Natural killer cell (primary cell): ENCODE measurements at regions of chr18 and their contacts with region 1.

Region 1: DNA sequence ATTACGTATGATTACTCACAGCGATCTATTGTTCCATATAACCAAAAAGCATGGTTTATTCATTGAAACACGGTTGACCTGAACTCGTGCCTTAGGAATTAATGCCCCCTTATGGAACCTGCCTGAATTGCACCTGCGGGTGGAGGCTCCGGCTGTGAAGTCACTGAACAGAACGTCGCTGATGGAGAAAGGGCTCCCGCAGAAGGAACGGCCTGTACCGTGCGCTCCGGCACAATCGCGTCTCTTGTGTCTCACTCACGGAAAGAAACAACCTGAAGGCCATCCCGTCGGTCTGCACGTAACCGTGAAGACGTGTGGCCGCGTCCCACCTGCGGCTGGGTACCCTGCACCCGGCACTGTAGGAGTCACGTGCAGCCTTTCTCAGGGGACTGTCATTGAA is 133.1 kb downstream of the NFATC1 start:
- DNase-seq: peak; percentile 49 to 86
- ATAC-seq: peak in 2 of 3 donors; percentile 33 to 36
- H3K4me3 ChIP-seq: no peak overlapping the region
- H3K4me3 Mint-ChIP-seq: no peak overlapping the region
- H3K27ac ChIP-seq: no peak overlapping the region
- H3K27ac Mint-ChIP-seq: no peak overlapping the region
- H3K4me1 ChIP-seq: peaks cover 11% of the 10 kb centered on the region
- H3K4me1 Mint-ChIP-seq: peaks cover 10 to 18% of the 10 kb centered on the region in 2 donors
- H3K27me3 ChIP-seq: no peaks in the 10 kb centered on the region
- H3K27me3 Mint-ChIP-seq: no peaks in the 10 kb centered on the region
- CTCF ChIP-seq: peak; percentile 75

Region 2: DNA sequence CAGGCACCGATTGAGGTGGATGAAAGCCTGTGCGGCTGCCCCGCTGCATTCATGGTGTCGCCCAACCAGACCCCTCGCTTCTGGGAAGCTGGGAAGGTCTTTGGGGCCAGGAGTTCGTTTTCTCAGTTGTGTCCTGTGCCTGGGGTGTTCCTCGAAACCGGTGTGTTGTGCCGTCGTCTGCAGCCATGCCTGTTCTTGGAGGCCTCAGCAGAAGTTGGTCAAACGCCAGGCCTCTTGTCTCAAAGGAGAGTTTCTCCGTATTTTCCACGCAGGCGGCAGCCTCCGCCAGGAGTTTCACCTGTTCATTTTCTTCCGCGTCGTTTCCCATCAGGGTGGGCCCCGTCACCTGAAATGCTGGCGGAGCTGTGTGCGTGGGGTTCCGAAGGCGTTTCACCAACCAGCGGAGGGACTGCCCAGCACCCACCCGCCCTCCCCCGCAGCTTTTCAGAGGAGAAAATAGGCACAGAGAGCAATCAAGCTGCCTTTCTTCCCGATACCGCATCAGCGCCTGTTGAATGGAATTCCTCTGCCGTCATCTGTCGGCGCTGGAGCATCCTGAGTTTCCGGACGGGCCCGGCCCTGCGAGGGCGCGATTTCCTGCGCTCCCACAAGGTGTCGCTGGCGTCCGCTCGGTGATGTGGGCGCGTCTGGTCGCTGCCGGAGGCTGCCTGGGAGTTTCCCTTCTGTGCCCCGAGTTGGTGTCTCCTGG is 150.2 kb before region 1 on chr18:
- intact Hi-C with region 1: loop called (anchors 1 kb)
- DNase-seq: peak; percentile 75 to 92
- ATAC-seq: peak; percentile 85 to 98 (median 94)
- H3K4me3 ChIP-seq: no peak overlapping the region
- H3K4me3 Mint-ChIP-seq: no peak overlapping the region
- H3K27ac ChIP-seq: no peak overlapping the region
- H3K27ac Mint-ChIP-seq: peak overlapping the region; percentile 41 to 66
- H3K4me1 ChIP-seq: peaks cover 8% of the 10 kb centered on the region
- H3K4me1 Mint-ChIP-seq: peaks cover 5 to 7% of the 10 kb centered on the region in 2 donors
- H3K27me3 ChIP-seq: no peaks in the 10 kb centered on the region
- H3K27me3 Mint-ChIP-seq: no peaks in the 10 kb centered on the region
- CTCF ChIP-seq: peak; percentile 93

Region 3: GRCh38 chr18:79644006-79644665 is 115.3 kb after region 1 on chr18:
- intact Hi-C with region 1: loop called (anchors 10 kb)
- DNase-seq: peak; percentile 43 to 81
- ATAC-seq: peak; percentile 82 to 97 (median 95)
- H3K4me3 ChIP-seq: no peak overlapping the region
- H3K4me3 Mint-ChIP-seq: no peak overlapping the region
- H3K27ac ChIP-seq: no peak overlapping the region
- H3K27ac Mint-ChIP-seq: no peak overlapping the region
- H3K4me1 ChIP-seq: peaks cover 22% of the 10 kb centered on the region
- H3K4me1 Mint-ChIP-seq: peaks cover 0 to 5% of the 10 kb centered on the region in 2 donors
- H3K27me3 ChIP-seq: no peaks in the 10 kb centered on the region
- H3K27me3 Mint-ChIP-seq: peaks cover 11 to 24% of the 10 kb centered on the region in 2 donors
- CTCF ChIP-seq: peak; percentile 98

Region 4: DNA sequence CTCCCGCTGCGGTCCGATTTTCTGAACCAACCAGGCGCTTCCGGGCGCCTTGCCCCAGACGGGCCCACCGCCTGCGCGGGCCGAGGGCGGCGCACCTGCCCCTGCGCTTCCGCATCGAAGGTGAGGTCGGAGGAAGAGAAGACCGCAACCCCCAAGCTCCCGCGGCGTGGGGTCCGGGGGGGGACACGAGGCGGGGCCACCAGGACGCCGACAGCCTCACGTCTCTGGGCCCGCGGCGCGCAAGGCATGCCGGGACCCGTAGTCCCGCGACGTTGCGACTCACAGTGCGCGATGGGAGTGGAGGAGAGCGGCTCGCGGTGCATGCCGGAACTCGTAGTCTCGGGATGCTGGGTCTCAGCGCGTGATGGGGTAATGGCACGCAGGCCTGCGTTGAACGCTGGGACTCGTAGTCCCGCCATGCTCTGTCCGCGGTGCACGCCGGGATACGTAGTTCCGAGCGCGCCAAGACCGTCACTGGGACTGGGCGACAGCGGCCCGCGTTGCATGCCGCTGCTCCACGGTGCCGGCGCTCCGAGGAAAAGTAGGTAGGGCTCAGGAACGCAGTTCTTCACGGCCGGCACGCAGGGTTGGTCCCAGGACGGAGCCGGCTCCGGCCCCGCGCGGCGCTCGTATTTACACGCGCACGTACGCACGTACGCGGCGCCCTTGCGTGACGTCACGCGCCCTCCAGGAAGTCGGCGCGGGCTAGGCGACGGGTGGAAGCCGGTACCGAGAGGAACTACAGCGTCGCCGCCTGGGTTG is 150.4 kb after region 1 on chr18 and contains the start of gene CTDP1:
- intact Hi-C with region 1: loop called (anchors 10 kb)
- DNase-seq: peak; percentile 98 to 99
- ATAC-seq: peak; percentile 86 to 95 (median 86)
- H3K4me3 ChIP-seq: peak within 1 kb of the TSS; percentile 100
- H3K4me3 Mint-ChIP-seq: peak within 1 kb of the TSS; percentile 91
- H3K27ac ChIP-seq: peak within 1 kb of the TSS; percentile 100
- H3K27ac Mint-ChIP-seq: peak within 1 kb of the TSS; percentile 96 to 99
- H3K4me1 ChIP-seq: peaks cover 48% of the 10 kb centered on the region
- H3K4me1 Mint-ChIP-seq: peaks cover 46 to 51% of the 10 kb centered on the region in 2 donors
- H3K27me3 ChIP-seq: no peaks in the 10 kb centered on the region
- H3K27me3 Mint-ChIP-seq: no peaks in the 10 kb centered on the region
- CTCF ChIP-seq: no peak
- total RNA-seq, gene CTDP1: 66.9 to 89.4 (median 77.1) TPM